ENCODE measurements at regions of chr7 and their contacts with region 1.

Region 1: DNA sequence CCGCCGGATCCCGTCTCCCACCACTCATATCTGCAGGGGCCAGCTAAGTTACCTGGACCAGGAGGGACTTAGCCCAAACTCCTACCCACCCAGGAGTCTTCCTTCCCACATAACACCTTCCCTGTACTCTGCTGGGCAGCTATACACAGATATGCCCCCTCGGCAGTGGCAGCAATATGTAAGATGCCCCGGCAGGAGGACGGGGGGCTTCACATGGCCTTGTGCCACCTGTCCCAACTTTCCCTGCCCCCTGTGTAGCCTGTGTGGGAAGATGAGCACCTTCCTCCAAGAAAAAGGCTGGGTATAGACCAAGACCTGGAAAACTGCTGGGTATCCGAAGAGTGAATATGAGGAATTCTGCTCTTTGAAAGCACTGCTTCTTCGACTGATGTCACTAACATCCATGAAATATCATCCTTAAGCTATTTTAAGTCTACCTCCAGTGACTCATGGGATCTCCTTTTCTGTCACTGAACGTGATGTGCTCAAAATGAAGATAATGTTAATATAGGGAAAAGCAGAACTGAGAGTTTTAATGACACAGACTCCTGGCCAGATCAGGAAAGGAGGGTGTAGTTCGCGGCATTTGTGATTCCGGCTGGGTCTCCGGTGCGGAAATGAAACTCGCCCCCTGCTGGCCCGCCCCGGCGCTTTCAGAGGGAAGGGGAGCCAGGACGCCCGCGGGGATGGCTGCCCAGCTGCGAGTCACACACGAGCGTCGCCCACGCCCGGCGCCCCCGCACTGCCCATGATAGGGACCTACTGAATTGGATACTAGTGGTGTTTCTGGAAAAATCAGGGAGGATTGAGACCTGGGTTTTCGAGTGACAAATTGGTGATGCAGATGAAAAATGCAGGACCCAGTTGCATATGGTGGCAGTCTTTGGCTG is 256.9 kb upstream of the NFE2L3 start:
- DNase-seq: peak; percentile 49 to 70
- ATAC-seq: peak; percentile 65 to 87 (median 74)
- H3K4me3 ChIP-seq: peak overlapping the region in 7 of 10 donors; percentile 1 to 35 (median 26)
- H3K27ac ChIP-seq: no peak overlapping the region
- H3K4me1 ChIP-seq: peaks cover 0 to 20% (median 7%) of the 10 kb centered on the region in 9 donors
- H3K27me3 ChIP-seq: peaks cover 5 to 74% (median 42%) of the 10 kb centered on the region in 7 donors
- CTCF ChIP-seq: peak; percentile 12 to 77 (median 67)

Region 2: GRCh38 chr7:25951031-25951948 is 56.1 kb after region 1 on chr7:
- intact Hi-C with region 1: loop called in 1 of 10 experiments (anchors 5 kb)
- DNase-seq: peak; percentile 74 to 88
- ATAC-seq: peak; percentile 88 to 97 (median 94)
- H3K4me3 ChIP-seq: peak overlapping the region; percentile 60 to 76 (median 66)
- H3K27ac ChIP-seq: peak overlapping the region in 3 of 10 donors; percentile 21 to 69 (median 56)
- H3K4me1 ChIP-seq: peaks cover 0 to 26% (median 13%) of the 10 kb centered on the region in 9 donors
- H3K27me3 ChIP-seq: peaks cover 0 to 50% (median 40%) of the 10 kb centered on the region in 7 donors
- CTCF ChIP-seq: no peak

Region 3: DNA sequence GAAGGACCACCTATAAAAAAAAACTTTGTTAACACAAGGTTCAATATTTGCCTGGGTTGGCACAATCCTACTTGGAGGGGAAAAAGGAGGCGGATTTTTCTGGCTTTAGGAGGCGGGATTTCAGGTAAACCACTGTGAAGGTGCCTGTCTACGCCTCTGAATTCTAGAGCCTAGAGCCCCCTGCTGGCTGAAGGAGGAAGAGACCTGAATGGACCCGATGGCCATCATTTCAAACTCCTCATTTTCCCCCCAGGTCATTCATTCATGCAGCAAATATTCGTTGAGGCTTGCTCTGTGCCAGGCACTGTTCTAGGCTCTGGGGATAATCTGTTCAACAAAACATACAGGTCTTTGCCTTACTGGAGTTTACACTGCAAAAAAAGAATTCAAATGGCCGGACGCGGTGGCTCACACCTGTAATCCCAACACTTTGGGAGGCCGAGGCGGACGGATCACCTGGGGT is 166.6 kb after region 1 on chr7:
- intact Hi-C with region 1: loop called (anchors 1 to 5 kb)
- DNase-seq: peak; percentile 23 to 55
- ATAC-seq: peak in 5 of 8 donors; percentile 33 to 74 (median 49)
- H3K4me3 ChIP-seq: no peak overlapping the region
- H3K27ac ChIP-seq: no peak overlapping the region
- H3K4me1 ChIP-seq: peaks cover 0 to 10% (median 0%) of the 10 kb centered on the region in 9 donors
- H3K27me3 ChIP-seq: peaks cover 0 to 88% (median 57%) of the 10 kb centered on the region in 7 donors
- CTCF ChIP-seq: peak; percentile 54 to 85 (median 74)

Region 4: GRCh38 chr7:26200444-26201246 is 305.5 kb after region 1 on chr7 and contains the start of gene HNRNPA2B1:
- intact Hi-C with region 1: loop called in 1 of 10 experiments (anchors 10 kb)
- DNase-seq: peak; percentile 95 to 97
- ATAC-seq: peak; percentile 82 to 93 (median 87)
- H3K4me3 ChIP-seq: peak within 1 kb of the TSS; percentile 65 to 99 (median 88)
- H3K27ac ChIP-seq: peak within 1 kb of the TSS; percentile 93 to 100 (median 99)
- H3K4me1 ChIP-seq: peaks cover 6 to 56% (median 51%) of the 10 kb centered on the region in 9 donors
- H3K27me3 ChIP-seq: no peaks in the 10 kb centered on the region
- CTCF ChIP-seq: peak in 1 of 9 donors; percentile 19
- total RNA-seq, gene HNRNPA2B1: 364 to 445 (median 398) TPM

Region 5: DNA sequence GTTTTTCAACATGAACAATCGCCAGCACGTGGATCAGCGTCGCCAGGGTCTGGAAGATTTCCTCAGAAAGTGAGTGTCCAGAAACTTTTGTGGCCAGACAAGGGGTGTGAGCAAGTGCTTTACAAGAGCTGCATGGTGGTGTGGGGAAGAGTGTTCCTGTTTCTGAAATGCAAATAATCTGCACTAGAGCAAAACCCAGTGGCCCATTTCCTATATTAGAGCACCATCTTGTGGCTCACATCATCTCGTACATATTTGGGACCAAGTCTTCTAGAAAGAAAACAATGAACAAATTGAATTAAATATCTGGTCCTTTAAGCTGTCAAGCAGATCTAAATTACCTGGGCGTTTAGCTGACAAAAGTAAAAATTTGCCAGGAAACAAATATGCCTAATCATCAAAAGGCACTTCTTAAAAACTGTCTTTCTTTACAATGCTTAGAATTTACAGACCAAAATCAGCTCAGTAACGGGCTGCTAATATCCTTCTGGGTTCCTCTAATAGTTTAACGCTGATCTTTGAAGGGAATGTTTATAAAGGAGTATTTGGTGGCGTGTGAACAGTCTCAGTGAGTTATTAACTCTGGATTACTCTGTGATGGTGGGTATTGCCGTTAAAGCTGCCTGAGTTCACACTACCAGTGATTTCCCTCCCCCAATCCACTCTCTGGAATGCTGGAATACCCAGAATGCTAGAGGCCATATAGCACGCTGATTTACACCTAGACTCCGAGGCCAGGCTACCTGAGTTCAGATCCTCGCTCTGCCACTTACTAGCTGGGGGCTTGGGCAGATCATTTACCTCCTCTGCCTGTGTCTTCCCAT is 470.1 kb after region 1 on chr7:
- intact Hi-C with region 1: loop called (anchors 1 to 5 kb)
- DNase-seq: peak in 1 of 2 donors; percentile 57
- ATAC-seq: peak; percentile 65 to 89 (median 80)
- H3K4me3 ChIP-seq: no peak overlapping the region
- H3K27ac ChIP-seq: no peak overlapping the region
- H3K4me1 ChIP-seq: peaks cover 0 to 26% (median 0%) of the 10 kb centered on the region in 9 donors
- H3K27me3 ChIP-seq: peaks cover 0 to 62% (median 40%) of the 10 kb centered on the region in 7 donors
- CTCF ChIP-seq: peak; percentile 53 to 87 (median 77)

Region 6: DNA sequence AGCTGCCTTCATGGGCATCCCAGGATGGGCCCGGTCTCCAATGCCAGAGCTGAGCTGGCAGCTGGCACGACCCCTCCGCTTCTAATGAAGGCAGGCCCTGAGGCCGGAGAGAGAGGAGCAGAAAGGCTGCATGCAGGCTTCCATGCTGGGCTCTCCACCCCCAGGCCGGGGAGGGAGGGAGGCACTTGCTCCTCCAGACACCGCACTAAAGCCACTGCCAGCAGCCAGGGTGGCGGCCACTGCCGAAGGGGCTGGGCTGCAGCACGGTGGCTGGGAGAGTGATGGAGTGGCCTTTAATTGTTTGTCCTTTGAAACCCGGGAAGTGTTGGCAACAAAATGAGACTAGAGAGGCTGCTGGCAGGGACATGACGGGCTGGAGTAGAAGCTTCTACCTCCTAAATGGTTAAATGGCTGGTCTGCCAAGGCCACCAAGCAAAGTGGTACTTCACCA is 732.8 kb after region 1 on chr7:
- intact Hi-C with region 1: no loop called
- DNase-seq: no peak
- ATAC-seq: peak in 4 of 8 donors; percentile 26 to 84 (median 71)
- H3K4me3 ChIP-seq: no peak overlapping the region
- H3K27ac ChIP-seq: no peak overlapping the region
- H3K4me1 ChIP-seq: no peaks in the 10 kb centered on the region
- H3K27me3 ChIP-seq: peaks cover 0 to 70% (median 9%) of the 10 kb centered on the region in 7 donors
- CTCF ChIP-seq: no peak

Region 7: DNA sequence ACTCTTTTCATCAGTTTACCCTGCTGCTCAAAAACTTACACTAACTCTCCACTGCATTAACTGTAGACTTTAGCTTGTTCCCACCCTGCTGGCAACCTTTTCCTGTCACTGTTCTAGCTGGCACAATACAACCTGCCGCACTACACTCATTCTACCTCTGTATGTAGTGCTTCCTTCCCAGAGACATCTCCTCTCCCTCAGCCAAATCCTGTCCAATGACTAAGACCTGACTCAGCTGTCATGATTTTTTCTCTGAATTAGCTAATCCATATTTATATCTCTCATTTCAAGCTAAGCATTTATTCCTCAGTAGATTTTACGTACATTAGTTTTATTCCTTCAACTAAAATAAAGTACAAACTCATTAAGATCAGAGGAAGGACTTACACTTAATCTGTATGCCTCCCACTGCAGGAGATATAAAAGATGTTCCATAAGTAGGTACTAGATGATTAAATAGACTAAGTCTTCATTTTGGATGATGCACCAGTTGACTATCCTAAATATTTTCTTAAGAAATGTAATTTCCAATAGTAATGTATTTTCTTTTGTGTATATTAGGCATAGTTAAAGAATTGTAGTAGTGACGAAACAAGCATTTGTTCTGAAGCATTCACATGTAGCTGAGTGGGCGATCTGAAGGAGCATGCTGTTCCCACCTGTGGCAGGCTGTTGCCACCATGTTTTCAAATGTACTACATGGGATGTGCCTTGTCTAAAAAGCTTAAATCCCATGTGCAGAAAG is 780.2 kb after region 1 on chr7:
- intact Hi-C with region 1: loop called in 2 of 10 experiments (anchors 5 to 10 kb)
- DNase-seq: no peak
- ATAC-seq: no peak
- H3K4me3 ChIP-seq: no peak overlapping the region
- H3K27ac ChIP-seq: no peak overlapping the region
- H3K4me1 ChIP-seq: no peaks in the 10 kb centered on the region
- H3K27me3 ChIP-seq: peaks cover 0 to 49% (median 18%) of the 10 kb centered on the region in 7 donors
- CTCF ChIP-seq: no peak

Region 8: GRCh38 chr7:27150568-27151340 is 1255.6 kb after region 1 on chr7:
- intact Hi-C with region 1: loop called in 1 of 10 experiments (anchors 10 kb)
- DNase-seq: peak in 1 of 2 donors; percentile 66
- ATAC-seq: peak; percentile 62 to 85 (median 78)
- H3K4me3 ChIP-seq: peak overlapping the region in 9 of 10 donors; percentile 16 to 47 (median 30)
- H3K27ac ChIP-seq: no peak overlapping the region
- H3K4me1 ChIP-seq: peaks cover 0 to 58% (median 31%) of the 10 kb centered on the region in 9 donors
- H3K27me3 ChIP-seq: peaks cover 63 to 100% (median 100%) of the 10 kb centered on the region in 7 donors
- CTCF ChIP-seq: peak; percentile 60 to 87 (median 80)